Activated T-helper 2 cell treated with anti-CD3 and anti-CD28 coated beads, Interferon-gamma antibody, Interleukin-2, Interleukin-4, amounts not matched to agents 10 μg/mL and 5 μg/mL and 100 μg/mL, durations not matched to agents 14 hours and 24 hours and 36 hours (primary cell): ENCODE measurements at regions of chr2 and their contacts with region 1.

Region 1: GRCh38 chr2:69643602-69644505 is at the start of gene AAK1:
- DNase-seq: peak; percentile 79
- H3K4me3 Mint-ChIP-seq: peak within 1 kb of the TSS; percentile 95
- H3K27ac Mint-ChIP-seq: peak within 1 kb of the TSS; percentile 98
- H3K4me1 Mint-ChIP-seq: peaks cover 63% of the 10 kb centered on the region
- H3K27me3 Mint-ChIP-seq: no peaks in the 10 kb centered on the region
- total RNA-seq, gene AAK1: 108 TPM in 2 replicates

Region 2: GRCh38 chr2:69436938-69437750 is 206.7 kb before region 1 on chr2 and contains the start of gene NFU1:
- intact Hi-C with region 1: loop called (anchors 2 kb)
- DNase-seq: peak; percentile 82
- H3K4me3 Mint-ChIP-seq: peak within 1 kb of the TSS; percentile 86
- H3K27ac Mint-ChIP-seq: peak within 1 kb of the TSS; percentile 96
- H3K4me1 Mint-ChIP-seq: peaks cover 24% of the 10 kb centered on the region
- H3K27me3 Mint-ChIP-seq: no peaks in the 10 kb centered on the region
- total RNA-seq, gene NFU1: 54.3 and 57.9 TPM in 2 replicates

Region 3: GRCh38 chr2:69601179-69601612 is 42.7 kb before region 1 on chr2:
- intact Hi-C with region 1: loop called (anchors 1 kb)
- DNase-seq: no peak
- H3K4me3 Mint-ChIP-seq: no peak overlapping the region
- H3K27ac Mint-ChIP-seq: peak overlapping the region; percentile 87
- H3K4me1 Mint-ChIP-seq: peaks cover 74% of the 10 kb centered on the region
- H3K27me3 Mint-ChIP-seq: no peaks in the 10 kb centered on the region

Region 4: DNA sequence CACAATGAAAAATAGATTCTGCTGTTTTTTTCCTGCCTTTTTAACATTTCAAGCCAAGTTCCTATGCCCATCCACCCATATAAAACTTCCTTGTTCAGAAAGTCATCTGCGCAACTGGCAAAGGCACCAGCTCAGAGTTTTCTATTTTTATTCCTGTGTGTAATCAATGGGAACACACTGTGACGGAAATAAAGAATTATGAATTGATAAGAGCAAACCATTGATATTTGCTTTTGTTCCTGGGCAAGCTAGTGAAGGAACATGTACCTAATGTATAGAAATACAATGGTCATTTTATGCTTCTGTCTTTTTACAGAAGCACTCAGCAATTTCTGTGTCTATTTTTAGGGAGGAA is 30.4 kb after region 1 on chr2:
- intact Hi-C with region 1: loop called (anchors 1 kb)
- DNase-seq: no peak
- H3K4me3 Mint-ChIP-seq: no peak overlapping the region
- H3K27ac Mint-ChIP-seq: no peak overlapping the region
- H3K4me1 Mint-ChIP-seq: peaks cover 25% of the 10 kb centered on the region
- H3K27me3 Mint-ChIP-seq: no peaks in the 10 kb centered on the region

Region 5: DNA sequence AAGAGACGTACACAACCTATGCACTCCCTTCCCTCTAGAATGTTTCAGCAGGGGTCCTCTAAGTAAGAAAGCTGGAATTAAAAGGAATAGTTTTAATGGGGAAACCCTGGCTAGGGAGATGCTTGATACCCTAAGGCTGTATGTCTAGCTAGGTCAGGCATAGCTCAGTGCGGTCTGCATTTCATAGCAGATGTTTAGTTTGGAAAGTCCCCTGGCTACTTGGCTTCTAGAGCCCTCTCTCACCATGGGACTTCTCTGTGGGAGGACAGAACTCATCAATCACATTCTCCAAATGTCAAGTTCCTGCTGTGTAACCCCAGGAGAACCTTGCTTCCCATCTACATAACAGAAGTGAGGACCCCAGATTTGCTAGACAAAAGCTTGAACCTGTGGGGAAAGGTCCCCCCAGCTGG is 74.0 kb after region 1 on chr2:
- intact Hi-C with region 1: loop called (anchors 5 kb)
- DNase-seq: no peak
- H3K4me3 Mint-ChIP-seq: no peak overlapping the region
- H3K27ac Mint-ChIP-seq: no peak overlapping the region
- H3K4me1 Mint-ChIP-seq: peaks cover 15% of the 10 kb centered on the region
- H3K27me3 Mint-ChIP-seq: no peaks in the 10 kb centered on the region

Region 6: GRCh38 chr2:70132244-70133126 is 488.6 kb after region 1 on chr2:
- intact Hi-C with region 1: loop called (anchors 10 kb)
- DNase-seq: no peak
- H3K4me3 Mint-ChIP-seq: peak overlapping the region; percentile 87
- H3K27ac Mint-ChIP-seq: peak overlapping the region; percentile 99
- H3K4me1 Mint-ChIP-seq: peaks cover 61% of the 10 kb centered on the region
- H3K27me3 Mint-ChIP-seq: no peaks in the 10 kb centered on the region